H1 (cell line): ENCODE measurements at regions of chr2 and their contacts with region 1.

Region 1: DNA sequence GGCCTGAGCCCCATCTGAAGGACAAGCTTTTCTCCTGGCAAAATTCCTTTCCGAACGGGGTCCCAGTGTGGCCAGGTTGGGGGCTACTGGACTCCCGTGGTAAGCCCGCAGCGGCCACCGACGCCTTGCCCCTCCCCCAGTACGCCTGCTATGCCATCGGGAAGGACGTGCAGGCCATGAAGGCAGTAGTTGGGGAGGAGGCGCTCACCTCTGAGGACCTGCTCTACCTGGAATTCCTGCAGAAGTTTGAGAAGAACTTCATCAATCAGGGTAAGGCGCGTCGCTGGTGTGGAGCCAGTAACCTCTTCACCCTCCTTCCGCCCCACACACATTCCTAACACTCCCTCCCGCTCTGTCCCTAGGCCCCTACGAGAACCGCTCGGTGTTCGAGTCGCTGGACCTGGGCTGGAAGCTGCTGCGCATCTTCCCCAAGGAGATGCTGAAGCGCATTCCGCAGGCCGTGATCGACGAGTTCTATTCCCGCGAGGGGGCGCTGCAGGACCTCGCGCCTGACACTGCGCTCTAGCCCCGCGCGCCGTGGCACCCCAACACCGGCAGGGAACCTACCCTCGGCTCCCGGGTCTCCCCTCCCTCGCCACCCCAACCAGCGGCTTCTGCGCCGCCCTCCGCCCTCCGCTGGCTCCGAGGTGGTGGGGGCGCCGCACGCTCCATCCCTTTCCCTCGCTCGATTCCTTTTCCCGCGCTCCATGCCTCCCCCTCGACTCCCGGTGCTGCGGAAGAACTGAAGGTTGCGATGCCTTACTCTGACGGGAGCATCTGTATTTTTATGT is 13.6 kb upstream of the ANKRD53 start:
- DNase-seq: peak in 1 of 2 experiments; percentile 92
- H3K4me3 ChIP-seq: peak overlapping the region in 3 of 4 experiments; percentile 18 to 64 (median 27); a peak in 7 of 8 replicates
- H3K27ac ChIP-seq: no peak overlapping the region
- H3K4me1 ChIP-seq: no peaks in the 10 kb centered on the region
- H3K27me3 ChIP-seq: peaks cover 10 to 38% (median 28%) of the 10 kb centered on the region in 4 experiments
- CTCF ChIP-seq: peak in 2 of 3 experiments; percentile 84 to 90; a peak in 3 of 4 replicates
- EP300 ChIP-seq: no peak
- POLR2A ChIP-seq: no peak
- RAD21 ChIP-seq: peak; percentile 71 to 75

Region 2: GRCh38 chr2:70871398-70872211 is 93.2 kb before region 1 on chr2:
- CTCF ChIA-PET with region 1: interaction called, 99 read pairs
- POLR2A ChIA-PET with region 1: no interaction called
- DNase-seq: peak in 1 of 2 experiments; percentile 98
- H3K4me3 ChIP-seq: no peak overlapping the region
- H3K27ac ChIP-seq: no peak overlapping the region
- H3K4me1 ChIP-seq: no peaks in the 10 kb centered on the region
- H3K27me3 ChIP-seq: peaks cover 6 to 42% (median 22%) of the 10 kb centered on the region in 4 experiments
- CTCF ChIP-seq: peak; percentile 89 to 99 (median 96)
- EP300 ChIP-seq: no peak
- POLR2A ChIP-seq: no peak
- RAD21 ChIP-seq: peak; percentile 92 to 96

Region 3: DNA sequence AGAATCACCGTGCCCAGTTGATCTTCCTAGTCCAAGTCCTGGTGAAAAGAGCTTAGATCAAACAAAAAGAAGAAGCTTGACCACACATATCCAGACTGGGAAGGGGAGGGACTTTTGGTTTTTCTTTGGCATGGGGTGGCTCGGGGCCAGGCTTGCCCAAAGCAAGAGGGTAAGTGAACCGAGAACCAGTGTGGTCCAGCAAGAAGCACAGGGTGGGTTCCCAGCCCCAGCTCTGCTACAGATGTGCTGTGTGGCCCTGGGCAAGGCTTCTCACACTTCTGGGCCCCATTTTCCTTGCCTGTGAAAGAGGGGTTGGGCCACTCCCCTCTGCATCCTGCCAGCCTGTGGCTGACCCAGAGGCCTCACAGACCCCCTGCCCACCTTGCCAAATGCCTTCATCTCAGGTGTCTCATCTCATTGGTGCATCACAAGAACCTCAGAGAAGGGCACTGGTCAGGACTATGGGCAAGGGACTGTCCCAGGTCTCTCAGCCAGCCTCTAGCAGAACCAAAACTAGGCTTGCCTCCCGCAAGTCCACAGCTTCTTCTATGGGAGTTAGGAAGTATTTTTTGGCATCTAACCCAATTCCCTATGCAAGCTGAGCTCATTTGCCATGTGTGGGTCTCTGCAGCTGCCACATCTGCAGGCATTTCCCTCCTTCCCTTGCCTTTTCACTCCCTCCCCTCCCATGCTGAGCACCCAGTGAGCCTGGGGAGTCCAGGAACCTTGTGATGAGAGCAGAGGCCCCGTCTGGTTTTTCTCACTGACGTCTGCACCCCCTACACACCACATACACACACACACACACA is 22.2 kb before region 1 on chr2:
- CTCF ChIA-PET with region 1: interaction called, 43 read pairs
- POLR2A ChIA-PET with region 1: interaction called, 5 read pairs
- DNase-seq: no peak
- H3K4me3 ChIP-seq: no peak overlapping the region; a peak in 1 of 8 replicates
- H3K27ac ChIP-seq: no peak overlapping the region
- H3K4me1 ChIP-seq: peaks cover 9 to 37% (median 29%) of the 10 kb centered on the region in 4 experiments
- H3K27me3 ChIP-seq: peaks cover 10 to 48% (median 40%) of the 10 kb centered on the region in 4 experiments
- CTCF ChIP-seq: no peak
- EP300 ChIP-seq: no peak
- POLR2A ChIP-seq: no peak
- RAD21 ChIP-seq: no peak

Region 4: DNA sequence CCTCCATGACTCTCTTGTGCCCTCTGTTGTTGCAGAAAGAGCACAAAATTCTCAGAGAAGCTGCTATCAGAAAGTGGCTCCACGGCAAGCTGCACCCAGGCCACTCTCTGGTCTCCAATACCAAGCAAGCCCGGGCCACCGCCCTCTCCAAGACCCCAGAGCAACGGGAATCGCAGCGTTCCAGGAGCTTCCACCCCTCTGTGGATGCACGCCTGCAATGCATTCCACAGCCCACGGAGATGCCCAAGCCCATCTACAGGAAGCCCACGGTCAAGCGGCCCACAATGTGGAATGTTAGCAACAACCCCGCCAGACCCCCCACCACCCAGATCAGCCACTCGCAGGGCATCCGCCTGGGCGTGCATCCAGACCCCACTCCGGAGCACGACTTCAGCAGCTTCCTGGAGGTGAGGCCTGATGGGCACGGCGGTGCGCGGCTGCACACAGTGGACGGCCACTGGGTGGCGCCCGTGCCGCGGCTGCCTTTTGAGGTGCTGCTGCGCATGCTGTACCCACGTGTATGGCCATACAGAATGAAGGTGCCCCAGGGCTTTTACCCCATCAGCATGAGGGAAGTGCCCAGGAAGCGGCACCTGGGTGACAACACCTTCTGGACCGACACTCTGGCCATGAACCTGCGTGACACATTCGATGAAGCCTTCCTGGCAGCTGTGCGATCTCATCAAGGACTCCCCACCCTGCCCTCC is 19.9 kb after region 1 on chr2:
- CTCF ChIA-PET with region 1: interaction called, 66 read pairs
- POLR2A ChIA-PET with region 1: no interaction called
- DNase-seq: peak in 1 of 2 experiments; percentile 93
- H3K4me3 ChIP-seq: peak overlapping the region in 1 of 4 experiments; percentile 35; a peak in 2 of 8 replicates
- H3K27ac ChIP-seq: no peak overlapping the region
- H3K4me1 ChIP-seq: peaks cover 0 to 6% (median 4%) of the 10 kb centered on the region in 4 experiments; a peak in 4 of 7 replicates
- H3K27me3 ChIP-seq: peaks cover 0 to 4% (median 2%) of the 10 kb centered on the region in 4 experiments; a peak in 5 of 7 replicates
- CTCF ChIP-seq: peak; percentile 90 to 98 (median 91)
- EP300 ChIP-seq: no peak
- POLR2A ChIP-seq: no peak
- RAD21 ChIP-seq: peak; percentile 67 to 78

Region 5: GRCh38 chr2:71060871-71061270 is 96.1 kb after region 1 on chr2:
- CTCF ChIA-PET with region 1: no interaction called
- POLR2A ChIA-PET with region 1: no interaction called
- DNase-seq: no peak
- H3K4me3 ChIP-seq: no peak overlapping the region
- H3K27ac ChIP-seq: no peak overlapping the region
- H3K4me1 ChIP-seq: no peaks in the 10 kb centered on the region; a peak in 1 of 7 replicates
- H3K27me3 ChIP-seq: no peaks in the 10 kb centered on the region; a peak in 1 of 7 replicates
- CTCF ChIP-seq: no peak
- EP300 ChIP-seq: no peak
- POLR2A ChIP-seq: no peak
- RAD21 ChIP-seq: no peak